PC-3 (cell line): ENCODE measurements at regions of chr10 and their contacts with region 1.

Region 1: GRCh38 chr10:89351780-89352597 is 24.2 kb downstream of the IFIT3 start:
- DNase-seq: peak; percentile 92
- ATAC-seq: peak; percentile 77
- H3K4me3 ChIP-seq: peak overlapping the region; percentile 25; the same call in 1 of the 2 replicates
- H3K27ac ChIP-seq: peak overlapping the region; percentile 87
- H3K4me1 ChIP-seq: peaks cover 43% of the 10 kb centered on the region
- H3K27me3 ChIP-seq: no peaks in the 10 kb centered on the region
- CTCF ChIP-seq: no peak

Region 2: DNA sequence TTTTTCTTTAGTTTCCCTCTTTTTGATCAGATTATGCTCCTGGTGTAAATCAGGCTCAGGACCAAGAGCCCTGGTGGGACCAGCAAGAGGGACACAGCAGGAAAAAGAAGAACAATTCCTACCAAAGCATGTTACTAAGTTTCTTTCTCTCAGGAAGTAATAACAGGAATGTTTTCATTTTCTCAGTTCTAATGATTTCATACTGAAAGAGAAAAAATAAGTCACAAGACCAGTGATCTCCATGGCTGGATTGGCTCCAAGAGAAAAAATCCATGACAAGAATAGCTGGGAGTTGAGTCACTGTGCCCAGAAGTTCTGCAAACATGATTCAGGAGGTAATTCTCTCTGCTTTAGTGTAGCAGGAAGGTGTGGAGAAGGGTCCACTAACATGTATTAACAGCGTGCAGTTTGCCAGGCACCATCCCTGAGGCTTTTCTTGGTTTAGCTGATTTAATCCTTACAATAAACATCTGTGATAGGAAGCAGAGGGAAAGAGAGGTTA is 73.9 kb before region 1 on chr10:
- CTCF ChIA-PET with region 1: no interaction called
- POLR2A ChIA-PET with region 1: no interaction called
- intact Hi-C with region 1: loop called (anchors 5 kb)
- DNase-seq: peak; percentile 98
- ATAC-seq: peak; percentile 85
- H3K4me3 ChIP-seq: peak overlapping the region; percentile 28; the same call in 1 of the 2 replicates
- H3K27ac ChIP-seq: peak overlapping the region; percentile 96
- H3K4me1 ChIP-seq: peaks cover 71% of the 10 kb centered on the region
- H3K27me3 ChIP-seq: no peaks in the 10 kb centered on the region
- CTCF ChIP-seq: no peak

Region 3: DNA sequence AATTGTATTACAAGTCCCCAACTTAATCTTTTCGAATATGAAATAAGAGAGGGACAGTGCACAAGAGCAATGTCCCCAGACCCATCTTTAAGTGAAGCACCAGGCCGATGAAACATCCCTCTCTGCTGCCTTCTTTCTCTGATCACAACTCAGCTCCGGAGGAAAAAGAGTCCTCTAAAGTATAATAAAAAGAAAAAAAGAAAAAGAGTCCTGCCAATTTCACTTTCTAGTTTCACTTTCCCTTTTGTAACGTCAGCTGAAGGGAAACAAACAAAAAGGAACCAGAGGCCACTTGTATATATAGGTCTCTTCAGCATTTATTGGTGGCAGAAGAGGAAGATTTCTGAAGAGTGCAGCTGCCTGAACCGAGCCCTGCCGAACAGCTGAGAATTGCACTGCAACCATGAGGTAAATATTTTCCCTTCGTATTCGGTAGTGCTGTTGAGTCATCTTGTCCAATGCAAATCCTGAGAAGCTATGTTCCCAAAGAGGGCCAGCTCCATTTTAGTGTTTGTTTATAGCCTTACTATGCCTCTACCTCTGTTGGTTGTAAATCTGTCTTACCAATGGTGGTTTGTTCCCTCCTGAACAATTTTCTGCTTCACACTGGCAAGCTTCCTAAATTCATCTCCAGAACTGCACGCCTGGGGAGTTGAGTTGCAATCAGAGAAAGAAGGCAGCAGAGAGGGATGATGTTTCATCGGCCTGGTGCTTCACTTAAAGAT is 50.1 kb before region 1 on chr10 and contains the start of gene IFIT2:
- CTCF ChIA-PET with region 1: no interaction called
- POLR2A ChIA-PET with region 1: interaction called, 13 read pairs
- intact Hi-C with region 1: no loop called
- DNase-seq: peak; percentile 71
- ATAC-seq: peak; percentile 67
- H3K4me3 ChIP-seq: peak within 1 kb of the TSS; percentile 66
- H3K27ac ChIP-seq: peak within 1 kb of the TSS; percentile 79
- H3K4me1 ChIP-seq: peaks cover 30% of the 10 kb centered on the region
- H3K27me3 ChIP-seq: no peaks in the 10 kb centered on the region
- CTCF ChIP-seq: no peak
- total RNA-seq, gene IFIT2: 6.9 and 8.6 TPM in 2 replicates

Region 4: GRCh38 chr10:89574368-89574767 is 222.4 kb after region 1 on chr10:
- CTCF ChIA-PET with region 1: no interaction called
- POLR2A ChIA-PET with region 1: no interaction called
- intact Hi-C with region 1: no loop called
- DNase-seq: no peak
- ATAC-seq: no peak
- H3K4me3 ChIP-seq: no peak overlapping the region
- H3K27ac ChIP-seq: no peak overlapping the region
- H3K4me1 ChIP-seq: peaks cover 12% of the 10 kb centered on the region
- H3K27me3 ChIP-seq: no peaks in the 10 kb centered on the region
- CTCF ChIP-seq: no peak